Activated T-helper 1 cell treated with anti-CD3 and anti-CD28 coated beads, Interleukin-12 subunit alpha, Interleukin-12 subunit beta, Interleukin-2, Interleukin-4 antibody, amounts not matched to agents 30 ng/mL and 10 ng/mL and 1 ng/mL, durations not matched to agents 14 hours and 24 hours and 36 hours (primary cell): ENCODE measurements at regions of chr12 and their contacts with region 1.

Region 1: DNA sequence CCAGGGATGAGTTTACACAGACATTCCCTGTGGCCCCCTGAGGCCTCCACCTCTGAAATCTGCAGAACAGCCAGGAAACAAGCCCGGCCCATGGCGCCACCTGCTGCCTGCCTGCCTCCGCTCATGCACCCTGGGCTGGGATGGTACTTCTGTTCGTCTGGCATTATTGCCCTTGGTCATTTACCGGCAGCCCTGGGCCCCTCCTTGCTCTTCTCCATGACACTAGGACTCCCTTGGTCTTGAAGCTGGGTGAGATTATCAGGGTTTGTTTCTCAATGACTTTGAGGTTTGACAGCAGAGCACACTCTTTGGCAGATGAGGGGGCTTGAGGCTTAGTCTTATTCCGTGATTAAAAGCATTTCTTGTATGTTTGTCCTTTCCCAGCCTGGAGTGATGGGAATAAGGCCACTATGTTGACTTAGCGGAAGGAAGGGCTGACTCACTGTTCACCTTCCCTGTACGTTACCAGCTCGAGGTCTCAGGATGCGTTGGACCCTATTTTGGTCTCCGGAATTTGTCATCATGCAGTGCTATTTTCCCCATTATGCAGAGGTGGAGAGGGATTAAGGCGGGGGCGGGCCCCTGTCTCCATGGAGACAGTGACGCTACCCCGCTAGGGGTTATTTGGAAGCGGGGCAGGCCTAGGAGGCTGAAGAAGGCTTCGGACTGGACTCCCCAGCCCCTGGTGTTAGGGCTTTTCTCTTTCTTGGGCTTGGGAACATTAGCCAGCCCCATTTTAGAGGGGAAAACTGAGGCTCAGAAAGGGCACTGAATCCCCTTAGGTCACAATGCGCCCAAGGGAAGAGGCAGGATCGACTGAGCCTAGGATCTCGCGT is 706 bp upstream of the PEX5 start:
- DNase-seq: peak; percentile 49
- H3K4me3 Mint-ChIP-seq: peak overlapping the region; percentile 93
- H3K27ac Mint-ChIP-seq: peak overlapping the region; percentile 98
- H3K4me1 Mint-ChIP-seq: peaks cover 31% of the 10 kb centered on the region
- H3K27me3 Mint-ChIP-seq: peaks cover 4% of the 10 kb centered on the region

Region 2: GRCh38 chr12:6961711-6962284 is 227.0 kb before region 1 on chr12:
- intact Hi-C with region 1: no loop called
- DNase-seq: no peak
- H3K4me3 Mint-ChIP-seq: peak overlapping the region; percentile 82
- H3K27ac Mint-ChIP-seq: peak overlapping the region; percentile 98
- H3K4me1 Mint-ChIP-seq: peaks cover 72% of the 10 kb centered on the region
- H3K27me3 Mint-ChIP-seq: no peaks in the 10 kb centered on the region

Region 3: DNA sequence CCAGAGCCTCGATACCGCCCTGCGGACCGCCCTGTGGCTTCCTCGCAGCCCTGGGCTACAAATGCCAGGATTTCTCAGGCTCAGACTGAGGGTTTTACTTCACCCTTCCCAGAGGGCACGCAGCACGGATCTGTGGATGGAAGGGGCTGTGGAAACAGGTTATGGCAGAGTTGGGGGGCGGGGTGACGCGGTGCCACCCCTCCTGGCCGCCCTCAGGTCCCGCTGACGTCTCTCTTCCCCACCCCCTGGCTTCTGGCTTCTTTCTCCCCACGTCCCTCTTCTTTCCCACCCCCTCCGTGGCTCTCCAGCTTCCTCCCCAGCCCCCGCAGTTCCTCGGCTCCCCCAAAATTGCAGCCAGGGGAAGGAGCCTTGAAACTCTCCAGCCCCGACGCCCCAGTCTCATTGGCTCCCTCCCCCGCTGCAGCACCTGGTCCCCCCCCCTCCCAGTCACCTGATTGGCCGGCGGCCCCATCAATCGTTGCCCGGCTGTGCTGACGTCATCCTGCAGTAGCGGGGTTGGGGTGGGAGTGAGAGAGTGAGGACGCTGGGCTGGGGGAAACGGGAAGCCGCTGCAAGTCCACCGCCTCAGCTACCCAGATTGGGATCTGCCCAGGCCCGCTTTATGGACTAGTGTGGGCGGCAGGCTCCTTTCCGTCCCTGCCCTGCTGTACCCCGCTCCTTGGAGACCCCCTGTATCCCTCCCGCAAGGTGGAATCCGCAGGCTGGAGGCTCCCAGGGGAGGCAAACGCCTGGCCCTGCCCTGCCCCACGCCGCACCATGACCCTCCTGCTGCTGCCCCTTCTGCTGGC is 58.7 kb before region 1 on chr12 and contains the start of gene CLSTN3:
- intact Hi-C with region 1: loop called (anchors 1 kb)
- DNase-seq: peak; percentile 84
- H3K4me3 Mint-ChIP-seq: peak within 1 kb of the TSS; percentile 96
- H3K27ac Mint-ChIP-seq: peak within 1 kb of the TSS; percentile 91
- H3K4me1 Mint-ChIP-seq: peaks cover 37% of the 10 kb centered on the region
- H3K27me3 Mint-ChIP-seq: no peaks in the 10 kb centered on the region
- total RNA-seq, gene CLSTN3: 48.5 and 50.8 TPM in 2 replicates

Region 4: DNA sequence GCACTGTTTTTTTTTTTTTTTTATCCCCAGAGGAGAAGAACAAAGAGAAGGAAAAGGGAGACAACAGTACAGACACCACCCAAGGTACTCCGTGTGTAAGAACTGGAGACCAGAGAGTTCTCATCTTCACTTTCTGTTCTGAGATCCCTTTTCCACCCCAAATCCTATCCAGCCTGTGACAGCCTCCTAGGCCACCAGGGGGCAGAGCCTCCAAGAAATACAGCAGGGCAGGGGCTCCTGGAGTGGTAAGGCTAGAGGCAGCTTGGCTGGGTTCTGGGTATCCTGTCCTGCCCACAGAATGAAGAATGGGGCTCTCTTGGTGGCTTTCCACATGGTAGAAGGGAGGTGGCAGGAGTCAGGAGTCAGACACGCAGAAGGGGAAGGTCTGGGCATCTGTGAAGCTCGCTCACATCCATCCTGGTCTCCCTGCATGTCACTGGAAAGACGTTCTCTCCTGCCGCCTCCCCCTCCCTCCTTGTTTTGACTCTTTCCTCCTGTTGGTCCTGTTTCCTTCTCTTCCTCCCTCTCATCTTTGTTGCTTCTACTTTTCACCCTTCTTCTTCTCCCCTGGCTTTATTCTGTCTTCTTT is 46.6 kb before region 1 on chr12:
- intact Hi-C with region 1: loop called (anchors 1 kb)
- DNase-seq: peak; percentile 32
- H3K4me3 Mint-ChIP-seq: no peak overlapping the region
- H3K27ac Mint-ChIP-seq: peak overlapping the region; percentile 24
- H3K4me1 Mint-ChIP-seq: peaks cover 6% of the 10 kb centered on the region
- H3K27me3 Mint-ChIP-seq: no peaks in the 10 kb centered on the region

Region 5: DNA sequence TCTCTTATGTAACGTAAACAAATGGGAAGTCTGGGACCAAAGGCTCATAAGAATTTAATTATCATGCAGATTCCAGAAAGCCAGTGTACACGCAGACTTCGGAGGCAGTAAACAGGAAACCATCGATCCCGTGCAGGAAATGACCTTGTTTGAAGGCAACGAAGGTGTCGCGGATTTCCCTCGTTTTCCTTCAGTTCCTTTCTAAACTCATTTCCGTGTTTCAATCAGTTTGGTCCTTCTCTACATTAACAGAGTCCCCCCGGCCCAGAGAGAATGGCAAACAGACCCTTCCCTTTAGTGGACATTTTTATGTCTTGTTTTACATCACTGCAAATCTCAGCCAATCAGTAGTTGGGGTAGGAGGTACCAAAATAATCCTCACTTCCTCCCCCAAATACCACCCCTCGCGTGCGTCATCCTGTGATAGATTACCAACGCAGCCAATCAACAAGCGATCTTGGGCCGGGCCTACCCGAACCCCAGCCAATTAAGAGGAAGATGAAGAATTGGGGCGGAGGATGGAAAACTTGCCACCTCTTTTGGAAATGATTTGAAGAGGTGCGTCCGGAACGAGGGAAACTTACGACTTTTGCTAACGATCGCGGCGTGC is 837.6 kb after region 1 on chr12:
- intact Hi-C with region 1: loop called (anchors 1 kb)
- DNase-seq: peak; percentile 96
- H3K4me3 Mint-ChIP-seq: peak overlapping the region; percentile 93
- H3K27ac Mint-ChIP-seq: peak overlapping the region; percentile 99
- H3K4me1 Mint-ChIP-seq: peaks cover 19% of the 10 kb centered on the region
- H3K27me3 Mint-ChIP-seq: no peaks in the 10 kb centered on the region